Cardiac septum (tissue), 1 donor: ENCODE measurements at regions of chr12 and their contacts with region 1.

Region 1: GRCh38 chr12:53047221-53048042 is 2.4 kb upstream of the TNS2 start:
- DNase-seq: peak; percentile 89

Region 2: DNA sequence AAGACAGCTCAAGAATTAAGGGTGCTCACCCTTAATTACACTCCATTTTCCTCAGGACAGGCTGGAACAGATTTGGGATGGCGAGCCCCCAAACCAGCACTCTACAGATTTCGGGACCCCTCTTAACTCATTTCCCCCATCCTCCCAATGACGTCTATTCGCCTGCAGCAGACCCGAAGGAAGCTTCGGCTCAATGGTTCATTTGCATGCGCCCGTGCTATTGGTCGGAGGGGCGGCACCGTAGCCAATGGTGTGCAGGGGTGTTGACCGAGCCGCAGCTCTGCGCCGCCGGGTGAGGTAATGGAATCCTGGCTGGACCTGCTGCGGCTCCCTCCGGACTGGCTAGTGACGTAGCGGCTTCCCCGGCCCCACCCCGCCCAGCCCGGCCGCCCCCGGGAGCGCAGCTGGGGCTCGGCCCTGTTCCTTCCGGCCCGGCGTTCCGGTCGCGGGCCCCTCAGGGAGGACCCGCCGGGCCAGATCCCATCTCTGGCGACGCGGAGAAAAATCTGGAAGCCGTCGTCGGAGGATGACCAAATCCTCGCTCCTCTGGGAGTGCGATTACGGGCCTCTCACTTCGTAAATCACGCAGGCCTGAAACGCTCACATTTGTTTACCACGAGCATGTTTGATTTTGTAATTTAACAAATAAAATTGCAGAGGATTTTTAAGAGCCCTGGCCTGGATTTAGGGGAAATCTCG is 1014.5 kb before region 1 on chr12:
- intact Hi-C with region 1: loop called (anchors 10 kb)
- DNase-seq: peak; percentile 100

Region 3: GRCh38 chr12:53005986-53006809 is 41.2 kb before region 1 on chr12 and contains the start of gene EIF4B:
- intact Hi-C with region 1: loop called (anchors 1 kb)
- DNase-seq: peak; percentile 100
- total RNA-seq, gene EIF4B: 324 TPM

Region 4: GRCh38 chr12:53251477-53252348 is 204.3 kb after region 1 on chr12:
- intact Hi-C with region 1: no loop called
- DNase-seq: peak; percentile 91